CD8-positive, alpha-beta T cell (primary cell): ENCODE measurements at regions of chr17 and their contacts with region 1.

Region 1: DNA sequence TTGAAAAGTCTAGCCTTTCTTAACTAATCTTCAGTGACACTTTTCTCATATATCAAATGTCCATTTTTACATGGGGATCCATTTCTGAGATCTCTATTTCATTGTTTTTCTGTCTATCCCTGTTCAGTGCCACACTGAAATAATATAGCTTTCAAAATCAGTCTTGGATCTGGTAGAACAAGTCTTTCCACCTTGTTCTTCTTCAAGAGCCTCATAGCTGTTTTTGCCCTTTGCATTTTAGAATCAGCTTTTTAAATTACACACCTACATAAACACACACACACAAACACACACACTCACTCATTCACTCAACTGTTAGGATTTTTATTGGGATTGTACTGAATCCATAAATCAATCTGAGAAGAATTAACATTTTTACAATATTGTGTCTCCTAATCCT is 19.2 kb downstream of the GSDMB start:
- DNase-seq: no peak
- ATAC-seq: no peak
- H3K4me3 ChIP-seq: no peak overlapping the region
- H3K4me3 Mint-ChIP-seq: no peak overlapping the region
- H3K27ac ChIP-seq: no peak overlapping the region
- H3K27ac Mint-ChIP-seq: peak overlapping the region; percentile 32
- H3K4me1 ChIP-seq: peaks cover 9% of the 10 kb centered on the region
- H3K4me1 Mint-ChIP-seq: peaks cover 18% of the 10 kb centered on the region
- H3K27me3 ChIP-seq: no peaks in the 10 kb centered on the region
- H3K27me3 Mint-ChIP-seq: no peaks in the 10 kb centered on the region
- CTCF ChIP-seq: no peak

Region 2: GRCh38 chr17:39687811-39688518 is 211.2 kb before region 1 on chr17 and contains the start of gene PGAP3:
- CTCF ChIA-PET with region 1: no interaction called
- POLR2A ChIA-PET with region 1: no interaction called
- intact Hi-C with region 1: no loop called
- DNase-seq: peak; percentile 54 to 92 (median 85)
- ATAC-seq: peak; percentile 93
- H3K4me3 ChIP-seq: peak within 1 kb of the TSS; percentile 68 to 85
- H3K4me3 Mint-ChIP-seq: peak within 1 kb of the TSS; percentile 97
- H3K27ac ChIP-seq: peak within 1 kb of the TSS; percentile 80 to 86
- H3K27ac Mint-ChIP-seq: peak within 1 kb of the TSS; percentile 98
- H3K4me1 ChIP-seq: peaks cover 17% of the 10 kb centered on the region
- H3K4me1 Mint-ChIP-seq: peaks cover 27% of the 10 kb centered on the region
- H3K27me3 ChIP-seq: peaks cover 0 to 2% of the 10 kb centered on the region in 2 experiments
- H3K27me3 Mint-ChIP-seq: no peaks in the 10 kb centered on the region
- CTCF ChIP-seq: no peak
- total RNA-seq, gene PGAP3: 20.9 to 22.6 TPM

Region 3: DNA sequence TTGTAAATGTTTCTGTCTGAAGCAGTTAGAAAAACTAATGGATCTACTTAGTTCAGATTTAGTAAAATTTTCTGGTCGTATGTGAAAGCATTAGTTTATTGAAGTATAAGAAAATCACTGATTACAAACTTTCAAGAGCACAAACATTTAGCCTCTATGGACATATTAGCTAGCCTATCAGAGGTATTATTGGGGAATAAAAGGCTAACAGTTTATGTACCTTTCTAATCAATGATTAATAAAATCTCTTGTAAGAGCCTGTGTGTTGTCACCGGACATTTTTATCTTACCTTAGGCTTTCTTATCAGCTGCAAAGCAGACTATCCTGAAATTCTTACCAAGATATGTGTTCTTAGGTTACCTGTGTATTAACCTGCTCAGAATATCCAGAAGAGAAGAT is 10.0 kb before region 1 on chr17:
- CTCF ChIA-PET with region 1: no interaction called
- POLR2A ChIA-PET with region 1: interaction called, 3 read pairs
- intact Hi-C with region 1: loop called in 1 of 2 experiments (anchors 1 kb)
- DNase-seq: no peak
- ATAC-seq: no peak
- H3K4me3 ChIP-seq: no peak overlapping the region
- H3K4me3 Mint-ChIP-seq: no peak overlapping the region
- H3K27ac ChIP-seq: no peak overlapping the region
- H3K27ac Mint-ChIP-seq: no peak overlapping the region
- H3K4me1 ChIP-seq: no peaks in the 10 kb centered on the region
- H3K4me1 Mint-ChIP-seq: peaks cover 1% of the 10 kb centered on the region
- H3K27me3 ChIP-seq: peaks cover 0 to 2% of the 10 kb centered on the region in 2 experiments
- H3K27me3 Mint-ChIP-seq: peaks cover 5% of the 10 kb centered on the region
- CTCF ChIP-seq: no peak

Region 4: DNA sequence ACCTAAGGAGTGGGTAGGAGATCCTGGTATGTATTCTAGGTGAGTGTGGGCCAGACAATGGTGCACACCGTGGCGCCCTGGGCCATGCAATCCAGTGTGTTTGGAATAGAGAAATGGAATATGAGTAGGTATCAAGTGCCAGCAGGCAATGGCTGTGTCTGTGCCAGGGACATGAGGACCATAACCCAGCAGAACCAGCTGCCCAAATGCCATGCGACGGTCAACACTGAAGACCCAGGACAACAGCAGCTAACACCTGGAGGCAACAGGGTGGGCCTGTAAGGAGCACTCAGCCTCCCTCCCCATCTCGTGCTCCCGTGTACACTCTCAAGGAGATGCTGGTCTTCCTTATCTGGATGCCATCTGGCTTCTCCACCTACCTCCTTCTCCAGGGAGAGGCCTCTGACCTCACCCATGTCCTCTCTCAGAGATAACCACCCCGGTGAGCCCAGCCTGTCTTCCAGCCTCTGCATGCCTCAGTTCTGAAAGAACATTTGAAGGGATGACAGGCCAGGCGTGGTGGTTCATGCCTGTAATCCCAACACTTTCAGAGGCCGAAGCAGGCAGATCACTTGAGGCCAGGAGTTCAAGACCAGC is 20.0 kb after region 1 on chr17:
- CTCF ChIA-PET with region 1: no interaction called
- POLR2A ChIA-PET with region 1: no interaction called
- intact Hi-C with region 1: no loop called
- DNase-seq: no peak
- ATAC-seq: no peak
- H3K4me3 ChIP-seq: no peak overlapping the region
- H3K4me3 Mint-ChIP-seq: peak overlapping the region; percentile 12
- H3K27ac ChIP-seq: no peak overlapping the region
- H3K27ac Mint-ChIP-seq: peak overlapping the region; percentile 71
- H3K4me1 ChIP-seq: peaks cover 60% of the 10 kb centered on the region
- H3K4me1 Mint-ChIP-seq: peaks cover 65% of the 10 kb centered on the region
- H3K27me3 ChIP-seq: no peaks in the 10 kb centered on the region
- H3K27me3 Mint-ChIP-seq: no peaks in the 10 kb centered on the region
- CTCF ChIP-seq: no peak